ENCODE measurements at regions of chr22 and their contacts with region 1.

Region 1: DNA sequence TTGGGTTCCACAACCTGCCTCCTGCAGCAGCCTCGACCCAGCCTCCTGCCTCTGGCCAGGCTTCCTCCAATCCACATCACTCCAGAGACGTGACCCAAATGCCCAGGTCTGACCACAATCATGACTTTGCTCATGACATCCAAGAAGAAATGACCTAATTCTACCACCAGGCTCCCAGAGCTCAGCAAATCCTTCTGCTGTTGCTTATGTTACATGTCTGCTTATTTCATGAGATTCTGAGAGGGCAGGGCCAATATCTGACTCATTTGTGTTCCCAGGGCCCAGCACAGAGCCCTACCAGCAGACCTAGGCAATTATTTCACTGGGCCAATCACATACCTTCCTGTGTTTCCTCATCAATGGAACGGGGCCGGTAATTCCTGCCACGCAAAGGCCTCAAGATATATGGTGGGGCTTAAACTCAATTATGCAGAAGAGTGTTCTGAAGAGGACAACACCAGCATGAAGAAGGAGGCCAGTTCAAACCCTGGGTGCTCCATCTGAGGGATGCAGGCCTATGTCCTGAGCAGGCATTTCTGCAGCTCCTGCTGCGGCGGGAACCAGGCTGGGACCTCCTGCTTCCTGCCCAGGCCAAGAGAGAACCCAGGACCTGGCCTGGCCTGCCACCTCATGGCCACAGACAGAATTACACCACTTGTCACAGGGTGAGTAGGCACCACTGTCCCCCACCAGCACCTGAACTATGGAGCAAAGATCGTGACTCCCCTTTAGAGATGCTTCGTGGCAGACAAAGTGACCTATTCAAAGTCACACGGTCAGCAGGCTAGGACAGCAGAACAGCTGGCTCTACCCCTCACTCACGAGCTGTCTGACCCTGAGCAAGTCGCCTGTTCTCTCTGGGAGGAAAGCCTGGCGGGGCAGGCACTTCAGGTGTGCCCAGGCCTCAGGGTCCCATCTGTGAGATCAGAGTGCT is 5.9 kb downstream of the CENPM start:
- DNase-seq: peak; percentile 85
- ATAC-seq: peak; percentile 55
- H3K4me3 Mint-ChIP-seq: peak overlapping the region; percentile 92
- H3K27ac Mint-ChIP-seq: peak overlapping the region; percentile 100
- H3K4me1 Mint-ChIP-seq: peaks cover 61% of the 10 kb centered on the region
- H3K27me3 Mint-ChIP-seq: no peaks in the 10 kb centered on the region
- CTCF ChIP-seq: no peak

Region 2: GRCh38 chr22:40950962-40951794 is 989.9 kb before region 1 on chr22 and contains the start of gene RBX1:
- CTCF ChIA-PET with region 1: no interaction called
- POLR2A ChIA-PET with region 1: no interaction called
- intact Hi-C with region 1: loop called (anchors 10 kb)
- DNase-seq: peak; percentile 96
- ATAC-seq: peak; percentile 83
- H3K4me3 Mint-ChIP-seq: peak within 1 kb of the TSS; percentile 100
- H3K27ac Mint-ChIP-seq: peak within 1 kb of the TSS; percentile 100
- H3K4me1 Mint-ChIP-seq: peaks cover 30% of the 10 kb centered on the region
- H3K27me3 Mint-ChIP-seq: no peaks in the 10 kb centered on the region
- CTCF ChIP-seq: no peak
- total RNA-seq, gene RBX1: 78.6 and 78.9 TPM in 2 replicates

Region 3: DNA sequence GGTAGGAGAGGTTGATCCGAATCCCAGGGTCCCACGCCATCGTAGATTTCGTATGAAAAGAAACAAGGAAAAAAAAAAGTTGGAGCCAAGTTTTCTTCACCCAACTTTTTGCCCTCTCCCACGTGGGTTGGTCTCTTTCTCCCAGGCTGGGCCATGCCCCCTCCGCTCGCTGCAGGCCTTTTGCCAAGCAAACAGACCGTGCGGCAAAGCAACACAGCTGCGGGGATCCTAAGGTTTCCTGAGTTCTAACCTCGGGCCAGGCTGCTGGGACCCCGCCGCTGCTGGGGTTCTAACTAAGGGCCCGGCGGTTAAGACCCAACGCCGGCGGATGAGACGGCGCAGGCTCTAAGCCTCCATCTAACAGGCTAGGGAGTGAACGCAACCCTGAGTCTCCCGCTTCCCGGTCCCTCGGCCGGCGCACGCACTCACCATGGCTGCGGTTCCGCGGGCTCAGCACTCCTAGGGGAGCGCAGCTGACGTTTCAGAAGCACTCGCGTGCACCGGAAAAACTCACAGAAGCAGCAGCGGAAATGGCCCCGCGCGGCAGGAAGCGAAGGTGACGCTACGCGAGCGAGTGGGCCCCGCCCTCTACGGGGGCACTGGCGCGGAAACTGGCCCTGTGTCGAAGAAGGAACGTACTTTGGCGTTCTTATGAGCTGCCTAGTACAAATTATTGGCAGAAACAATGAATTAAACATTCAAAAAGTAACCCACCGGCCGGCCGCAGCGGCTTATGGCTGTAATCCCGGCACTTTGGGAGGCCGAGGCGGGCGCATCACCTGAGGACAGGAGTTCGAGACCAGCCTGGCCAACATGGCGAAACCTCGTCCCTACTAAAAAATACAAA is 252.5 kb before region 1 on chr22 and contains the start of gene SNU13:
- CTCF ChIA-PET with region 1: no interaction called
- POLR2A ChIA-PET with region 1: interaction called, 30 read pairs
- intact Hi-C with region 1: no loop called
- DNase-seq: peak; percentile 88
- ATAC-seq: peak; percentile 94
- H3K4me3 Mint-ChIP-seq: peak within 1 kb of the TSS; percentile 97
- H3K27ac Mint-ChIP-seq: peak within 1 kb of the TSS; percentile 96
- H3K4me1 Mint-ChIP-seq: peaks cover 28% of the 10 kb centered on the region
- H3K27me3 Mint-ChIP-seq: no peaks in the 10 kb centered on the region
- CTCF ChIP-seq: no peak
- total RNA-seq, gene SNU13: 157 and 165 TPM in 2 replicates

Region 4: DNA sequence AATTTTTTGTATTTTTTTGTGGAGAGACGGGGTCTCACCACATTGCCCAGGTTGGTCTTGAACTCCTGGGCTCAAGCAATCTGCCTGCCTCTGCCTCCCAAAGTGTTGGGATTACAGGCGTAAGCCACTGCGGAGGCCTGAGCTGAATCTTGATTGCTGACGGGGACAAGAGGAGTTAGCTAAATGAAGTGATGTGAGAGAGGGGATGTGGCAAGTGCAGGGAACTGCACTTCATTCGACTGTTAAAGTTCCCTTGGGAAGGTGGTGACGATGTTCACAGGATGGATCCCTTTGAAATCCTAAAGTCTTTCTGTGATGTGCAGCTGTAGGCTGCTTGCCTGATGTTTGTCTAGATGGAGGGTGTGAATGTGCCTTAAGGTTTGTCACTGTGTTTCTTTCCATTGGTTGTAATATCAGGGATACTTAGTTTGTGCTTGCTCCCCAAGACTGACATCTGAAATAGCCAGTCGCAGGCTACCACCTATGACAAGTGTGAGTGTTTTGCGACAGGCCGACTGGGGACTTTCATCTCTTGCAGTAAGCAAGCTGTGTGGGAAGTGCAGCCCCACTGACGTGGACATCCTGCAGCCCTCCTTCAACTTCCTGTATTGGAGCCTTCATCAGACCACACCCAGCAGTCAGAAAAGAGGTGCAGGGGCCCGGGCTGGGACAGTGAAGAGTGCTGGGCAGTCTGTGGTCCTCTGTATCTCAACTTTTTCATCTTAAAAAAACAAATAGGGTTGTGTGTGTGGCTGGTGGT is 160.2 kb before region 1 on chr22:
- CTCF ChIA-PET with region 1: no interaction called
- POLR2A ChIA-PET with region 1: interaction called, 8 read pairs
- intact Hi-C with region 1: loop called (anchors 1 kb)
- DNase-seq: peak; percentile 60
- ATAC-seq: peak; percentile 96
- H3K4me3 Mint-ChIP-seq: peak overlapping the region; percentile 86
- H3K27ac Mint-ChIP-seq: peak overlapping the region; percentile 93
- H3K4me1 Mint-ChIP-seq: peaks cover 40% of the 10 kb centered on the region
- H3K27me3 Mint-ChIP-seq: no peaks in the 10 kb centered on the region
- CTCF ChIP-seq: no peak

Region 5: GRCh38 chr22:41832553-41833368 is 108.3 kb before region 1 on chr22 and contains the start of gene SREBF2:
- CTCF ChIA-PET with region 1: interaction called, 32 read pairs
- POLR2A ChIA-PET with region 1: interaction called, 221 read pairs
- intact Hi-C with region 1: loop called (anchors 1 kb)
- DNase-seq: peak; percentile 96
- ATAC-seq: peak; percentile 85
- H3K4me3 Mint-ChIP-seq: peak within 1 kb of the TSS; percentile 98
- H3K27ac Mint-ChIP-seq: peak within 1 kb of the TSS; percentile 99
- H3K4me1 Mint-ChIP-seq: peaks cover 62% of the 10 kb centered on the region
- H3K27me3 Mint-ChIP-seq: no peaks in the 10 kb centered on the region
- CTCF ChIP-seq: no peak
- total RNA-seq, gene SREBF2: 253 and 307 TPM in 2 replicates

Region 6: DNA sequence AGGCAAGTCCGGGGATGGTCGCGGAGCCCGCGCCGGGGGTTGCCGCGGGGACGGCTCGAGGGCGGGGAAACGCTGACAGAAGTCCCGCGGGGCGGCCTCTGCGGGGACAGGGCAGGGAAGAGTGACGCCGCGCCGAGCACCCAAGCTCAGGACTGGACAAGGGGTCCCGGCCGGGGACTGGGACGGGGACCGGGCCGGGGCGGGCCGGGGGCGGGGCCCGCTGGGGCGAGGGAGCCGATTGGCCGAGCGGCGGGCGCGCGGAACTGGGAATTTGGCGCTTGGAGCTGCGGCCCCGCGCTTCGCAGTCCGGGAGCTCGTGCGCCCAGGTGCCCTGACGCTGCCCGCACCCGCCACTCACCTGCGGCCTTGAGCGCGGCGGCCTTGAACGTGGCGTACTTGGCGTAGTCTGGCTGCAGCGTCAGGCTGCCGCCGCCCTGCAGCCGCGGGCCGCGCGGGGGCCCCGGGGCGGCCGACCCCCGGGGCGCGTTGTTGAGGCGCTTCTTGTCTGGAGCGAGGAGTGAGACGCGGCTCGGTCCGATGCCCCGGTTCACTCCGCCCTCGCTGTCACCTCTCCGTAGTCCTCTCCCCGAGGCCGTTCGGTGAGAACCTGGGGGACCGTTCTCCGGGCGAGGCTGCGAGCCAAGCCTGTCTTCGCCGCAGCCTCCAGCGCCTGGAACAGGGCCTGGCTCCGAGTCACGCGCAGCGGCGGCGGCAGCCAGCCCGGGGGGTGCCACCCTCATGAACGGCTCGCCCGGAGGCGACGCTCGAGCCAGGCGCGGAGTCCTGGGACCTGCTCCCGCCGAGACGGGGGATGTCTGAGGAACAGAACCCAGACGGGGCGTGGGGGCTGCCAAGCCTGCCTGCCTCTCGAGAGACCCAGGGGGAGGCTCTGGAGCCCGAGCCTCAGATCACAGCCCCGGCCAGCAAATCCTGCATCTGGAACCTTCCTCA is 30.8 kb before region 1 on chr22:
- CTCF ChIA-PET with region 1: interaction called, 13 read pairs
- POLR2A ChIA-PET with region 1: interaction called, 90 read pairs
- intact Hi-C with region 1: loop called (anchors 5 kb)
- DNase-seq: peak; percentile 57
- ATAC-seq: peak; percentile 15
- H3K4me3 Mint-ChIP-seq: peak overlapping the region; percentile 68
- H3K27ac Mint-ChIP-seq: no peak overlapping the region
- H3K4me1 Mint-ChIP-seq: peaks cover 48% of the 10 kb centered on the region
- H3K27me3 Mint-ChIP-seq: peaks cover 10% of the 10 kb centered on the region
- CTCF ChIP-seq: no peak

Region 7: GRCh38 chr22:41951898-41952474 is 10.9 kb after region 1 on chr22 and contains the start of gene SMIM45:
- CTCF ChIA-PET with region 1: interaction called, 5 read pairs
- POLR2A ChIA-PET with region 1: interaction called, 29 read pairs
- intact Hi-C with region 1: loop called (anchors 2 kb)
- DNase-seq: peak; percentile 57
- ATAC-seq: peak; percentile 87
- H3K4me3 Mint-ChIP-seq: peak within 1 kb of the TSS; percentile 35
- H3K27ac Mint-ChIP-seq: no peak within 1 kb of the TSS
- H3K4me1 Mint-ChIP-seq: peaks cover 60% of the 10 kb centered on the region
- H3K27me3 Mint-ChIP-seq: no peaks in the 10 kb centered on the region
- CTCF ChIP-seq: no peak

Region 8: DNA sequence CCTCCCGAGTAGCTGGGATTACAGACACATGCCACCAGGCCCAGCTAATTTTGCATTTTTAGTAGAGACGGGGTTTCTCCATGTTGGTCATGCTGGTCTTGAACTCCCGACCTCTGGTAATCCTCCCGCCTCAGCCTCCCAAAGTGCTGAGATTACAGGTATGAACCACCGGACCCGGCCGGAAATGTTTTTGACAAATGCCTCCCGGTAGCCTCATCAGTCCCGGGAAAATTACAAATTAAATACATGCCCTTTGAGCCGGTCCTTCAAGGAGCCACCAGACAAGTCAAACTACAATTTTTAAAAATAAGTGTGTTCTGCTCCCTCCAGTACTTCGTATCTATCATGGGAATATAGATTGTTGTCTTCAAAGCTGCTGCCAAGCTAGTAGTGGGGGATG is 75.0 kb after region 1 on chr22:
- CTCF ChIA-PET with region 1: no interaction called
- POLR2A ChIA-PET with region 1: no interaction called
- intact Hi-C with region 1: no loop called
- DNase-seq: no peak
- ATAC-seq: no peak
- H3K4me3 Mint-ChIP-seq: no peak overlapping the region
- H3K27ac Mint-ChIP-seq: no peak overlapping the region
- H3K4me1 Mint-ChIP-seq: peaks cover 7% of the 10 kb centered on the region
- H3K27me3 Mint-ChIP-seq: no peaks in the 10 kb centered on the region
- CTCF ChIP-seq: no peak